ENCODE measurements at regions of chr16 and their contacts with region 1.

Region 1: DNA sequence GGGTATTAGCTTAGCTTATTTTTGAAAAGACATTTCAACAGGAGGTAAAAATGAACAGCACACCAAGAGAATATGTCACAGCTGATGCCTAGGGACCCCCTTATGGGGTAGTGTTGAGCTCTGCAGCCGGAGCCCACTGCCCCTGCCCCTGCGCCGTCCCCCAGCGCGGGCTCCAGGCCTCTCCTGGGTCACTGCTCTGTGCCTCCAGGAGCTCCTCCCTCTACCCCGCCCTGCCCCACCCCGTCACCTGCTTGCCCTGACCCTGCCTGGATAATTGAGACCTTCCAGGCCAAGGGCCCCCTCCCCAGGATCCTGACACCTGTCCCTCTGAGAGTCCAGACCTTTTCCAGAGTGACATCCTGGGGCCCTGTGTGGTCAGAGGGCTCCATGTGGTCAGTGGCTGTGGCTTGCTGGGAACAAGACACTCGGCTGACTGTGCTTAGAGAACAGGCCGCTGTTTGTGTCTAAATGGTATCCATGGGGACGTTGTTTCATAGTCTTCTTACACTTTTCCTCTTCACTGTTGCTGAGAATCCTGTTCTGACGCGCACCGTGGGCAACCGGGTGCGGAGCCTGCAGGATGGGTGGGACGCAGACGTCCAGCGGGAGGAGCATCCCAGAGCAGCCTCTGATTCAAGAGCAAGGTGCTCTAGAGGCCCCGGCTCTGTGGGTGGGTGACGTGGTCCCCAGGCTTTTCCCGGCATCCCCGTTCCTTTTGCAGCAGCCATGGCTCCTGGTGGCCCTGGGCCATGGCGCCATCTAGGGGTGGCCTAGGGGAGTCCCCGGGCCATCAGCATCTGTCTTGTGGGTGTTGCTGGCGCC is 20.1 kb upstream of the WFIKKN1 start:
- DNase-seq: peak; percentile 35 to 77 (median 48)
- ATAC-seq: peak; percentile 78
- H3K4me3 ChIP-seq: no peak overlapping the region
- H3K4me3 Mint-ChIP-seq: no peak overlapping the region
- H3K27ac ChIP-seq: no peak overlapping the region
- H3K27ac Mint-ChIP-seq: no peak overlapping the region
- H3K4me1 ChIP-seq: peaks cover 9% of the 10 kb centered on the region
- H3K4me1 Mint-ChIP-seq: peaks cover 5% of the 10 kb centered on the region
- H3K27me3 ChIP-seq: no peaks in the 10 kb centered on the region
- H3K27me3 Mint-ChIP-seq: no peaks in the 10 kb centered on the region
- CTCF ChIP-seq: peak; percentile 73

Region 2: DNA sequence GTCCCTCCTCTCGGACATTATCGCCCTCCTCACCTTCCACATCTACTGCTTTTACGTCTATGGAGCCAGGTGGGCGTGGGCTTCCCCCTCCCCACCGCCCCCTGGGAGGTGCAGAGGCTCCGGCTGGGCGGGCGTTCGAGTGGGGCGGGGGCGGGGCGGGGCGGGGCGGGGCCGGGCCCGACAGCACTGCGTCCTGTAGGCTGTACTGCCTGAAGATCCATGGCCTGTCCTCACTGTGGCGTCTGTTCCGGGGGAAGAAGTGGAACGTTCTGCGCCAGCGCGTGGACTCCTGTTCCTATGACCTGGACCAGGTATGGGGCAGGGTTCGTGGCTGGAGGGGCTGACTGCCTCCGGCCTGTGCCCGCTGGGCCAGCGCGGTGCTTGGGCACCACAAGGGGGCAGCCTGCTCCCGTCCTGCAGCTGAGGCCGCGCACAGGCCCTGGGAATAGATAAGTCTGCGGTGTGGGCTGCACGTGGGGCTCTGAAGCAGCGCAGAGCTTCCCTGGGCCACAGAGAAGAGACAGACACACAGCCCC is 31.8 kb before region 1 on chr16:
- CTCF ChIA-PET with region 1: interaction called, 5 read pairs
- POLR2A ChIA-PET with region 1: no interaction called
- intact Hi-C with region 1: loop called (anchors 1 to 2 kb)
- DNase-seq: peak; percentile 32 to 86 (median 57)
- ATAC-seq: peak; percentile 95
- H3K4me3 ChIP-seq: no peak overlapping the region
- H3K4me3 Mint-ChIP-seq: no peak overlapping the region
- H3K27ac ChIP-seq: no peak overlapping the region
- H3K27ac Mint-ChIP-seq: no peak overlapping the region
- H3K4me1 ChIP-seq: peaks cover 4% of the 10 kb centered on the region
- H3K4me1 Mint-ChIP-seq: no peaks in the 10 kb centered on the region
- H3K27me3 ChIP-seq: no peaks in the 10 kb centered on the region
- H3K27me3 Mint-ChIP-seq: no peaks in the 10 kb centered on the region
- CTCF ChIP-seq: peak; percentile 71

Measured in CD4-positive, alpha-beta T cell (primary cell).